ENCODE measurements at regions of chr5 and their contacts with region 1.

Region 1: DNA sequence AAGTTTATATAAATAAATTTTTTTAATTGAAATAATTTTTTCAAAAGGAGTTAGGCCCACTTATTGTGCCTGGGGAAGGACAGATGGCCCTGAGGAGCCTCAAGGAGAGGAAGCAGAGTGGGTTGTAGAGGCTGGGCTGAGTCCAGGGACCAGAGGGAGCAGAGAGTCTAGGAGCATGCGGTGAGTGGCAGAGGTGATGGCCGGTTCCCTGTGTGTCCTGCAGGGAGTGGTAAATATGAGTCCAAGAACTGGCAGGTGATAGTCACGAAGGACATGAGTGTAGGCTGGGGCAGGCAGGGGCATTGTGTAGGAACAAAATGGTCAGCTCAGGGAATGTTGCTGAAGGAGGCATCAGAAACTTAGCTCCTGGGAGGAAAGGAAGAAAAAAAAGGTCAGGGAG is 8.3 kb upstream of the BTNL9 start:
- DNase-seq: no peak
- H3K4me3 ChIP-seq: no peak overlapping the region
- H3K27ac ChIP-seq: no peak overlapping the region
- H3K4me1 ChIP-seq: no peaks in the 10 kb centered on the region
- H3K27me3 ChIP-seq: no peaks in the 10 kb centered on the region
- CTCF ChIP-seq: no peak
- POLR2A ChIP-seq: no peak

Region 2: DNA sequence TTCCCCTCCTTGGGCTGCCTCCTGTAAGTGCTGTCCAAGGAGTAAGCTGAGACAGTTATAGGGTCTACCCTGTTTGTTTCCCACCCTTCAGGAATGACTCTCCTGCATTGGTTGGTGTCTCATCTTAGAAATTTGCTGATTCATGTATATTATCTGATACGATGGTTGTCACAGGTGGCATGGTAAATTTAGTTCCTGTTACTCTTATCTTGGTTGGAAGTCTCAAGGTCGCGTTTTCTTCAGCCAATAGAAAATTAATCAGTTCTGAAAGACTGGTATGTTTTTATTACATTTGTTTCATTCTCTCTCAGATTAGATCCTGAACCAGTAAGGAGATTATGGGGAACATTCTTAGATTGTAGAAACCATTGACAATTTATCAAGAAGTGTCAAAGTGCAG is 483.2 kb before region 1 on chr5:
- intact Hi-C with region 1: no loop called
- DNase-seq: no peak
- H3K4me3 ChIP-seq: no peak overlapping the region
- H3K27ac ChIP-seq: no peak overlapping the region
- H3K4me1 ChIP-seq: no peaks in the 10 kb centered on the region
- H3K27me3 ChIP-seq: no peaks in the 10 kb centered on the region
- CTCF ChIP-seq: no peak
- POLR2A ChIP-seq: no peak

Region 3: DNA sequence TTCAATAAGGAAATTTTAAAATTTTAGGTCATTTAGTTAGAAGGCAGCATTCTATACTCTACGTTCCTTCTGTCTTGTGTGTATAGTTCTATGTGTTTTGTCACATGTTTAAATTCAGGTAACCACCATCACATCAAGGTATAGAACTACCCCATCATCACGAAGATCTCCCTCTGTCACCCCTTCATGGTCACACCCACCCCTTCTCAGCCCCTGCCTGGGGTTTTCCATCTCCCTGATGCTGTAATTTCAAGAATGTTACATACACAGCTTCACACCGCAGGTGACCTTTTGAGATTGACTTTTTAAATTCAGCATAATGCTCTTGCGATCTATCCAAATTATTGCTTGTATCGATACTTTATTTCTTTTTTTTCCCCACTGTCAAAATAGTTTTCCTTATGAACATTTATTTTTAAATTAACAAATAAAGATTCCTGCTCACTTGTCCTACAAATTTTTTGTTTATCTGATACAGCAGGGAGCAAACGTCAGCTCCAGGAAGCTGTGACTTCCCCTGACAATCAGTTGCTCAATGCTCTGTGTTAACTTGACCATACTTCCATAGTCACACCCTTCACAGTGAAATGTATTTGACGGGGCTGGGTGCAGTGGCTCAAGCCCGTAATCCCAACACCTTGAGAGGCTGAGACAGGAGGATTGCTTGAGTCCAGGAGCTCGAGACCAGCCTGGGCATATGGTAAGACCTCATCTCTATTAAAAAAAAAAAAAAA is 122.6 kb before region 1 on chr5:
- intact Hi-C with region 1: no loop called
- DNase-seq: no peak
- H3K4me3 ChIP-seq: no peak overlapping the region
- H3K27ac ChIP-seq: no peak overlapping the region
- H3K4me1 ChIP-seq: no peaks in the 10 kb centered on the region
- H3K27me3 ChIP-seq: no peaks in the 10 kb centered on the region
- CTCF ChIP-seq: no peak
- POLR2A ChIP-seq: no peak

Region 4: GRCh38 chr5:180969406-180969805 is 62.3 kb before region 1 on chr5:
- intact Hi-C with region 1: loop called (anchors 5 kb)
- DNase-seq: no peak
- H3K4me3 ChIP-seq: no peak overlapping the region
- H3K27ac ChIP-seq: no peak overlapping the region
- H3K4me1 ChIP-seq: no peaks in the 10 kb centered on the region
- H3K27me3 ChIP-seq: no peaks in the 10 kb centered on the region
- CTCF ChIP-seq: no peak
- POLR2A ChIP-seq: no peak

Measured in breast epithelium (tissue), 4 donors.